Activated T-helper 1 cell treated with anti-CD3 and anti-CD28 coated beads, Interleukin-12 subunit alpha, Interleukin-12 subunit beta, Interleukin-2, Interleukin-4 antibody, amounts not matched to agents 30 ng/mL and 10 ng/mL and 1 ng/mL, durations not matched to agents 14 hours and 24 hours and 36 hours (primary cell): ENCODE measurements at regions of chr11 and their contacts with region 1.

Region 1: DNA sequence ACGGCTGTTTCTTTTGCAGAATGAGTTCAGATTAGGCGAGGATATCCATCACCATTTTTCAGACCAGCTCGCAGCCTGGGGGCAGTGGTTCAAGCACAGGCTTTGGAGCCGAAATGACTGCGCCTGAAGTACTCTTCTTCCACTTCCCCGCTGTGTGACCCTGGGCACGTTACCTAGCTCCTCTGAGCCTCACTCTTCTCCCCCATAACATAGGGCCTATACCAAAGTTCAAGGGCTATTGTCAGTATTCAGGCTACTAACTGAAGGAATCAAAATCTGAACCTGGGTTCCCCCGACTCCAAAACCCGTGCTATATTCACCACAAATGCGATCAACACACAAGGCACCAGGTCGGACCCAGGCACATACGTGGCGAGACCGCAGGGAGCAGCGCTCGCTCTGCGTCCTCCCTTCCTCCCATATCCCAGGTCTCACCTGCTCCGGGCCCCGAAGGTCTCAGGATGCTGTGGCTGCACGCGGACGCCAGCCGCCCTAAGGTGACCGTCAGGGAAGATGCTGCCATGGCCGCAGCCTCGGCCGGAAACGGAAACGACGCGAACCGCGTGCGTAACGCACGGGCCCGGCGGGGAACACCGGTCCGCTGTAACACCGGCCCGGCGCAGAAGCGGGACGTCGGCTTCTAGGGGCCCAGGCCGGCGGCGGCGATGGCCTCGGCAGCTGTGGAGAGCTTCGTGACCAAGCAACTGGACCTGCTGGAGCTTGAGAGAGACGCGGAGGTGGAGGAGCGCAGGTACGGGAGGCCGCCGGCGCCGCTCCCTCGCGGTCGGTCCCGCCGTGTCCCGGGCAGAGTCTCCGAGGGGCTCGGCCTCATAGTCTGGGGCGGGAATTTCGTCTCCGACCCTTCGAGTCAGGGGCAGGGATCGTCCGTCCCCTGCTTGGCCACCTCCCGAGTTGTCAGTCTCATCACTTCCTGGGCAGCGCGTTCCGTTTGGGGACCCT is at the starts of genes IGHMBP2 and MRPL21:
- DNase-seq: peak; percentile 85
- H3K4me3 Mint-ChIP-seq: peak within 1 kb of the TSS; percentile 96
- H3K27ac Mint-ChIP-seq: peak within 1 kb of the TSS; percentile 89
- H3K4me1 Mint-ChIP-seq: peaks cover 42% of the 10 kb centered on the region
- H3K27me3 Mint-ChIP-seq: no peaks in the 10 kb centered on the region
- total RNA-seq, gene IGHMBP2: 39.0 and 42.3 TPM in 2 replicates
- total RNA-seq, gene MRPL21: 121 and 122 TPM in 2 replicates

Region 2: GRCh38 chr11:68751004-68751856 is 152.3 kb before region 1 on chr11 and contains the start of gene TESMIN:
- intact Hi-C with region 1: loop called (anchors 2 kb)
- DNase-seq: peak; percentile 83
- H3K4me3 Mint-ChIP-seq: peak within 1 kb of the TSS; percentile 75
- H3K27ac Mint-ChIP-seq: no peak within 1 kb of the TSS
- H3K4me1 Mint-ChIP-seq: no peaks in the 10 kb centered on the region
- H3K27me3 Mint-ChIP-seq: no peaks in the 10 kb centered on the region
- total RNA-seq, gene TESMIN: 1.0 and 2.1 TPM in 2 replicates

Region 3: DNA sequence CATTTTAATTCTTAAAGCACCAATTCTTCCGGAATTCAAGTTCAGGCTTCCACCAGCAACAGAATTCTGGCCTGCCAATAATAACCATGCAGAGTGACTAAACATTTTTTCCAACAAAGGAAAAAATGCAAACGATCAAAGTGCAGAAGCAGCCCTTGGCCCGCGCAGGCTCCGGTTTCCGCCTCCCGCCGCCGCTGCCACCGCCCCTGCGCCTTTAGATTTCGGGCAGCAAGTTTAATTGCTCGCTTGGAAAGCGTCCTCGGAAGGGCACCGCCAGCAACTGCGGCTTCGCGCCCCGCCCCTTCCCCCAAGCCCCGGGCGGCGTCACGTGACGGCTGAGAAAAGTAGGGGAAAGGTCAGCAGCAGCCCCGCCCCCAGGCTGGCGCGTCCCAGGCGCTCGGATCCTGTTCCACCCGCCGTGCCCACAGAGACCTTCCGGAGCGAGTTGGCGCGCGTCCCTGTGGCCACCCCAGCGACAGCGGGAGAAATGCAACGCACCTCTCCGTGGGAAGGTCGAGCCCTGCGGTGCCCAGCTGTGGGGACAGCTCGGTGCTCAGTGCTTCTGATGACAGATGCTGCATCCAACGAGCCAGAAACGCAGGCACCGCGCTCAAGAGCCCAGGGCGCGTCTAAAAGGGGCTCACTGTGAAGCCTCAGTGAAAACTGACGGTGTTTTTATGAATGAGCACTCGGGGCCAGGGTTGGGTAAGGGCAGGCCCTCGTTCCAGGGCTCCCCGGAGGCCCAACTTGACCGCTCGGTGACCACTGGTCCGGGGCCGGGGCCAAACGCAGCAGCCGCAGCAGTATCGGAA is 64.3 kb before region 1 on chr11:
- intact Hi-C with region 1: loop called (anchors 1 kb)
- DNase-seq: peak; percentile 85
- H3K4me3 Mint-ChIP-seq: peak overlapping the region; percentile 70
- H3K27ac Mint-ChIP-seq: peak overlapping the region; percentile 73
- H3K4me1 Mint-ChIP-seq: peaks cover 50% of the 10 kb centered on the region
- H3K27me3 Mint-ChIP-seq: peaks cover 2% of the 10 kb centered on the region

Region 4: GRCh38 chr11:69048718-69049489 is 145.3 kb after region 1 on chr11 and contains the start of gene TPCN2:
- intact Hi-C with region 1: loop called (anchors 1 kb)
- DNase-seq: peak; percentile 91
- H3K4me3 Mint-ChIP-seq: peak within 1 kb of the TSS; percentile 85
- H3K27ac Mint-ChIP-seq: peak within 1 kb of the TSS; percentile 72
- H3K4me1 Mint-ChIP-seq: peaks cover 14% of the 10 kb centered on the region
- H3K27me3 Mint-ChIP-seq: peaks cover 13% of the 10 kb centered on the region
- total RNA-seq, gene TPCN2: 17.4 and 19.2 TPM in 2 replicates

Region 5: GRCh38 chr11:69088676-69089146 is 185.1 kb after region 1 on chr11:
- intact Hi-C with region 1: loop called (anchors 2 kb)
- DNase-seq: peak; percentile 32
- H3K4me3 Mint-ChIP-seq: no peak overlapping the region
- H3K27ac Mint-ChIP-seq: no peak overlapping the region
- H3K4me1 Mint-ChIP-seq: no peaks in the 10 kb centered on the region
- H3K27me3 Mint-ChIP-seq: no peaks in the 10 kb centered on the region

Region 6: GRCh38 chr11:69642913-69643632 is 739.5 kb after region 1 on chr11:
- intact Hi-C with region 1: loop called (anchors 1 kb)
- DNase-seq: peak; percentile 62
- H3K4me3 Mint-ChIP-seq: peak overlapping the region; percentile 73
- H3K27ac Mint-ChIP-seq: no peak overlapping the region
- H3K4me1 Mint-ChIP-seq: no peaks in the 10 kb centered on the region
- H3K27me3 Mint-ChIP-seq: peaks cover 24% of the 10 kb centered on the region

Region 7: DNA sequence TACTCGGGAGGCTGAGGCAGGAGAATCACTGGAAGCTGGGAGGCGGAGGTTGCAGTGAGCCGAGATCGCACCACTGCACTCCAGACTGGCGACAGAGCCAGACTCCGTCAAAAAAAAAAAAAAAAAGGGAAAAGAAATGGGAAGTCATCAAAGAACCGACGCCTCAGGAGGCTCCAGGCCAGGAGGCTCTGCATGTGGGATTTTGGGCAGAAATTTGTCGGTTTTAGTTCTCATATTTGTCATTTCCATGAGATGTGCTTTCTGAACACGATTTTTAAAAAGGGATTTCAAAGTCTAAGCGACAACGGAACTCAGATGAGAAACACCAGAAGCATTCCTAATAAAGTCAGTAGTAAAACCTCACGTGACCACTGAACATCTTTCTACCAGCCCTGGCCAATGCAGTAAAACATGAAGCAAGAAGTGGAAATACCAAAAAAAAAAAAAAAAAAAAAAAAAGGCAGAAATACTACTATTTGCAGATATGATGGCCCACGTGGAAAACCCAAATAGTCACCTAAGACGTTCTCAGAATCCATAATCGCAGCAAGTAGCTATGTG is 772.3 kb after region 1 on chr11:
- intact Hi-C with region 1: loop called (anchors 5 kb)
- DNase-seq: no peak
- H3K4me3 Mint-ChIP-seq: peak overlapping the region; percentile 97
- H3K27ac Mint-ChIP-seq: no peak overlapping the region
- H3K4me1 Mint-ChIP-seq: peaks cover 20% of the 10 kb centered on the region
- H3K27me3 Mint-ChIP-seq: peaks cover 7% of the 10 kb centered on the region